MCF 10A (cell line): ENCODE measurements at regions of chr1 and their contacts with region 1.

Region 1: DNA sequence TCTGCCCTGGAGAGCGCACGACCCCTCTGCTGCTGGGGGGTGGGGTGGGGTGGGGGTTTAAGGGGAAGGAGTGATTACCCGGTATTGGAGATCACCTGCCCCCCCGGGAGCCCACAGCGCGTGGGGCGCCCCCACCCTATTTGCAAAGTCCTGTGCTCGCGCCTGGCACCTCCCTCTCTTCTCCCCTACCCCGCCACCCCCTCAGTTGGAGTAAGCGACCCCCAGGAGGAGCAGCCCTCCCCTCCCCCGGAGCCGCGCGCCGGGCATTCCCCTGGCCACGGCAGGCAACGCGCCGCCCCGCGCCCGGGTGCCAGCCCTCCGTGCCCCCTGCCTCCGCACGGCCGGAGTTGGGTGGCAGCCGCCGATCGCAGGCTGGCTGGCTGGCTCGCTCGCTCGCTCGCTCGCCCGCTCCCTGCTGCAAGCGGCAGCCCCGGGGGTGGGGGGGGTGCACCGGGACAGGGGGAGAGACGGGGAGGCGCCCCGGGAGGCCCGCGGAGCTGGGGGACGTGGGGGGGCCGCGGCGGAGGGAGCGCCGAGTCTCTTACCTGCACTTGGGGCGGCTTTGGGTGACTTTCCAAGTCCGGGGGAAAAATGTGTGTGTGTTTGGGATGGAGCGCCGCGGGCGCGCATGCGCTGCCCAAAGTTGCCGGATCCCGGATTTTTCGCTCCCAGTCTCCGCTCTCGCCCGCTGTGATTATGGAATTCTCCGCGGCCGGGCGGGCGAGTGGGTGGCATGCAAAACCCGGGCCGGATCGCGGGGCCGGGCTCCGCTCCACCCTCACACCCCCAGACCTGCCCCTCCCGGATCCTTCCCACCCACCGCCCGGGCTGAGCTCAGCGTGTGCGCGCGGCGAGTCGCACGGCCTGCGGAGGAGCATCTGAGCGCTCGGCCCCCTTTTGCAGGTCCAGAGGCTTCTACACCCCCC is at the start of gene CASZ1:
- DNase-seq: peak; percentile 87
- H3K4me3 Mint-ChIP-seq: peak within 1 kb of the TSS; percentile 95
- H3K27ac Mint-ChIP-seq: no peak within 1 kb of the TSS
- H3K4me1 Mint-ChIP-seq: peaks cover 18% of the 10 kb centered on the region
- H3K27me3 Mint-ChIP-seq: no peaks in the 10 kb centered on the region
- CTCF ChIP-seq: no peak
- total RNA-seq, gene CASZ1: 11.1 and 13.2 TPM in 2 replicates

Region 2: GRCh38 chr1:10598389-10598702 is 197.9 kb before region 1 on chr1:
- CTCF ChIA-PET with region 1: no interaction called
- POLR2A ChIA-PET with region 1: no interaction called
- intact Hi-C with region 1: no loop called
- DNase-seq: peak; percentile 27
- H3K4me3 Mint-ChIP-seq: no peak overlapping the region
- H3K27ac Mint-ChIP-seq: peak overlapping the region; percentile 97
- H3K4me1 Mint-ChIP-seq: peaks cover 18% of the 10 kb centered on the region
- H3K27me3 Mint-ChIP-seq: no peaks in the 10 kb centered on the region
- CTCF ChIP-seq: no peak

Region 3: DNA sequence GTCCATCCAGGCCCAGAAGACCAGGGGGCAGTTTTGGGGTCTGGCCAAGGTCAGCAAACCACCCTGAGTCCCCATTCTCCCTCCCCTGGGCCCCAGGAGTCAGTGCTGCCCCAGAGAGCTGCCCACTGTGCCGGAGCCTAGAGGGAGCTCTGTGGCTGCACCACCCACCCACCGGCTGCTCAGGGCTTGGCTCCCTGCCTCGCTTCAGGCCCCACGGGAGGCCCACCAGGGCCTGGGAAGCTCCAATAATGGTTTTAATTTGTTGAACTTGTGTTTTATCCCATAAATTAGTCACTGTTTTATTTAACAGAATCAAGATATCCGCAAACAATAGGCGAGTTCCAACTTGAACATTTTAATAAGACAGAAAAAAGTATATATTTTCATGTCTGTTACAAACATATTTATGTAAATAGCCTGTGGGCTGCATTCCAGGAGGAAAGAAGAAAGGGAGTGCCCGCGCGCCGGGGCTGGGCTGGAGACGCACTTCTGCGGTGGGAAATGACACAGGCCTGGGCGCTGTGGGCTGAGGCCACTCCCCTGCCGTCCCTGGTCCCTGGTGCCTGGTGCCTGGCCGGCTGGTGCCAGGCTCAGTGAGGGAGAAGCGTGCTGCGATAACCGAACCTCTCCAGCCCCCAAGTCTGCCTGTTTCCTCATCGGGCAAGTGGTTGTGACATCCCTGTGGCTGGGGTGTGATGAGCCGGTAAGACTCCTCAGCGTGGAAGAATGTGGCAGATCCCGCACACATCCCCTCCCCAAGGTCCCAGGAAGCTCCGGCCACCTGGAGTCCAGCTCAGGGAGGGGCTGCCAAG is 161.0 kb before region 1 on chr1:
- CTCF ChIA-PET with region 1: no interaction called
- POLR2A ChIA-PET with region 1: interaction called, 3 read pairs
- intact Hi-C with region 1: loop called (anchors 2 kb)
- DNase-seq: peak; percentile 93
- H3K4me3 Mint-ChIP-seq: peak overlapping the region; percentile 66
- H3K27ac Mint-ChIP-seq: peak overlapping the region; percentile 95
- H3K4me1 Mint-ChIP-seq: peaks cover 10% of the 10 kb centered on the region
- H3K27me3 Mint-ChIP-seq: no peaks in the 10 kb centered on the region
- CTCF ChIP-seq: no peak

Region 4: DNA sequence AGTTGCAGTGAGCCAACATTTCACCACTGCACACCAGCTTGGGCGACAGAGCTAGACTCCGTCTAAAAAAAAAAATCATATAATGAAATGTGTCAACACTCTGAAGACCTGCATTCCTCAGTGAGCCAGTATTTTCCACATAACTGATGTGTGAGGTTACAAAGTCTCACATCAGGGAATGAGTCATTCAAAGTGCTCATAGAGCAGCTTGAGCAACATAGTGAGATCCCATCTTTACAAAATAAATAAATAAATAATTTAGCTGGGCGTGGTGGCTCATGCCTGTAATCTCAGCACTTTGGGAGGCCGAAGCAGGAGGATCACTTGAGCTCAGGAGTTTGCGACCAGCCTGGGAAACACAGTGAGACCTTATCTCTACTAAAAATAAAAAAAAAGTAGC is 65.2 kb before region 1 on chr1:
- CTCF ChIA-PET with region 1: no interaction called
- POLR2A ChIA-PET with region 1: interaction called, 7 read pairs
- intact Hi-C with region 1: loop called (anchors 10 kb)
- DNase-seq: peak; percentile 92
- H3K4me3 Mint-ChIP-seq: no peak overlapping the region
- H3K27ac Mint-ChIP-seq: peak overlapping the region; percentile 49
- H3K4me1 Mint-ChIP-seq: no peaks in the 10 kb centered on the region
- H3K27me3 Mint-ChIP-seq: no peaks in the 10 kb centered on the region
- CTCF ChIP-seq: no peak

Region 5: GRCh38 chr1:10818262-10819197 is 22.2 kb after region 1 on chr1:
- CTCF ChIA-PET with region 1: interaction called, 7 read pairs
- POLR2A ChIA-PET with region 1: interaction called, 19 read pairs
- intact Hi-C with region 1: no loop called
- DNase-seq: peak; percentile 76
- H3K4me3 Mint-ChIP-seq: peak overlapping the region; percentile 30
- H3K27ac Mint-ChIP-seq: peak overlapping the region; percentile 73
- H3K4me1 Mint-ChIP-seq: peaks cover 37% of the 10 kb centered on the region
- H3K27me3 Mint-ChIP-seq: no peaks in the 10 kb centered on the region
- CTCF ChIP-seq: no peak

Region 6: DNA sequence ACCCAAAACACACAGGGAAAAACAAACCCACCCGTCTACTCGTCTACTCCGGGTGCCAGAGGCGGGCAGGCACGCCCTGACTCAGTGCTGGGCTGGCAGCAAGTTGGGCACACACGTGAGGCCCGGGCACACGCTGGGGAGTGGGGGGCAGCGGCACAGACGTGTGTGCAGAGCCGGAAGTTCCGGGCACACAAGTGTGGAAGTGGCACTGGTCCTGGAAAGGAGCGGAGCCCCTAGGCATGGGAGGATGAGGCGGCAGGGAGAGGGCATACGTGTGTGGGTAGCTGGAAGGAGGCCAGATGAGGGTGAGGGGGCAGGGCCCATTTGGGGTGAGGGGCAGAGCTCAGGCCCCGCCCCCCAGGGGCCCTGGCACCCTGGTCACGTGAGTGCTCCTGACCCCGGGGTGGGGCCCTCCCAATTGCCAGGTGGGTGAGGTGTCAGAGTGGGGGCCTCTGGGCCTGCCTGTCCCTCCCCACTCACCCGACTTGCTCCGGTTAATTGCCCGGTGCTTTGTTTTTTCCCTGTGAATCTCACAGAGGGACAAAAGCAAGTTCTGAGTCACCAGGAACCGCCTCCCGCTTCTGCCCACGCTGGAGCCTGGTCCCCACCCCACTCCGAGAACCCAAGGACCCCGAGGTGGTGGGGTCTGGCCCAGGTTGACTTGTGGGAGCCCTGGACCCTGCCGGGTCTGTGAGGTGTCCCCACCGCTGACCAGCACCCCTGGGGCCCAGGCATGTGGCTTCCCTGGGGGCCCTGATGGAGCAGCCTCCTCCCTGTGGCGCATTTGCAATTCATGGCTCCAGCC is 105.0 kb after region 1 on chr1:
- CTCF ChIA-PET with region 1: interaction called, 3 read pairs
- POLR2A ChIA-PET with region 1: interaction called, 14 read pairs
- intact Hi-C with region 1: loop called (anchors 10 kb)
- DNase-seq: peak; percentile 63
- H3K4me3 Mint-ChIP-seq: peak overlapping the region; percentile 72
- H3K27ac Mint-ChIP-seq: peak overlapping the region; percentile 93
- H3K4me1 Mint-ChIP-seq: peaks cover 43% of the 10 kb centered on the region
- H3K27me3 Mint-ChIP-seq: no peaks in the 10 kb centered on the region
- CTCF ChIP-seq: no peak